CD8-positive, alpha-beta T cell (primary cell): ENCODE measurements at regions of chr12 and their contacts with region 1.

Region 1: DNA sequence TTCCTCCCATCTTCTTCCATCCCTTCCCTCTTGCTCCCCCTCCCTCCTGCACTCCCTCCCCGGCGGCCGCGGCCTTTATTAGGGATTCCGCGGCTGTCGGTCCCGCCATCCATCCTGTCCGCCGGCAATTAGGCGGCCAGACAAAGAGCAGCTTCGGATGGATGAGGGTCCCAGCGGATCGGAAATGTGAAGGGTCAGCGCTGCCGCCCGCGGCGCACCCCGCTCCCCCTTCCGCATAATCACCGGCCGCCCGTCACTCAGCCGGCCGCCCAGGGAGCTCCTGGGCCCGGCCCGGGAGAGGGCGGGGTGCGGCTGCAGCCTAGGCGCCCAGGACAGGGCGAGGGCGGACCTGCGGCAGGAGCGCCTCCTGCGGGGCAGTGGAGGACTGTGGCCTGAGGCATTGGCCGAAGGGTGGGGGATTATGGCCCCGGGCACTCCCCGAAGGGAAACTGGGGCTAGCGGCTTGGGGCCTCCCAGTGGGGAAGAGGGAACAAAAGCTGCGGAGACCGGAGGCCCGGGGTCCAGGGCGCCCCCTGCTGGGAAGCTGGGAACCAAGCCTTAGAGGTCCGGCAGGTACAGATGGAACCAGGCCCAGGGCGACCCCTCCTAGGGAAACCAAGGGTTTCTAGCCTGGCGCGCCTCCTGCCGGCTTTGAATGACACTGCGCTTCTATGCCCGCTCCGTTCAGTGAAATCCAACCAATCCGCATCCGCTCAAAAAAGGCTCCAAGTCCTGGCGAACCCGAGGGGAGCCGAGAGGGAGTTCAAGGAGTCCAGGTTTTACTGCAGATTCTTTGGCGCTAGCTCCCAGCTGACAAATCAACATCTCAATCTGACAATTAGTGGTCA is 4.4 kb upstream of the DNAJC22 start:
- DNase-seq: peak; percentile 39 to 84 (median 74)
- ATAC-seq: peak; percentile 66
- H3K4me3 ChIP-seq: peak overlapping the region; percentile 45 to 52
- H3K4me3 Mint-ChIP-seq: peak overlapping the region; percentile 73
- H3K27ac ChIP-seq: no peak overlapping the region
- H3K27ac Mint-ChIP-seq: no peak overlapping the region
- H3K4me1 ChIP-seq: peaks cover 43% of the 10 kb centered on the region
- H3K4me1 Mint-ChIP-seq: peaks cover 45% of the 10 kb centered on the region
- H3K27me3 ChIP-seq: peaks cover 22 to 55% of the 10 kb centered on the region in 2 experiments
- H3K27me3 Mint-ChIP-seq: peaks cover 42% of the 10 kb centered on the region
- CTCF ChIP-seq: peak; percentile 88

Region 2: DNA sequence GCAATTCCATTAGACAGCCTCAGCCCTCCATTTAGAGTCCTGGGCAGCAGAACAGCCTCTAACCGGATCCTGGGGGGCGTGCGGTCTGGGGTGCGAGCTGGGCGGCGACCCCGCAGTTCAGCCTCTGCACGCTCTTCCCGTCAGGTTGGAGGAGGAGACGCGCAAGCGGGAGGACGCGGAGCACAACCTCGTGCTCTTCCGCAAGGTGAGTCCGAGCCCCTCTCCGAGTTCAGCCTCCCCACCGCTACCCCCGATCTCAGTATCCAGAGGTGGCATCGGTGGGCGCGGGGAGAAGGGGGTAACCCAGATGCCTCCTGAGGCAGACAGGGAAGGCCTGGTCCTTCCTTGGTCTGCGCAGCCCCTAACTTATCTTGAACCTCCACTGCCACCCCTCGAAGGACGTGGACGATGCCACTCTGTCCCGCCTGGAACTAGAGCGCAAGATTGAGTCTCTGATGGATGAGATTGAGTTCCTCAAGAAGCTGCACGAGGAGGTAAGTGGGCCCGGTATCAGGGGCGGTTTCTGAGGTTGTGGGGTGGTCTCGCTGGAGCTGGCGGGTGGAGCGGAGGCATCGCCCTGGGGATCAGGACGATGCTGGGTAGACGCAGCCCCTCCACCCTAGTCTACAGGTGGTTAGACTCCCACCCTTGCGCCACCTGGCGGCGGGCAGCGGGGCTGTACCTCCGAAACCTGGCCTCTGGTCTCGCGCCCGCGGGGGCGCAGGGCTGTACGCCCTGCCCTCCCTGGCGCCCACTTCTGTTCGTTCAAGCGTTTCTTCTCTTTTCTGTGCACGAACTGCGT is 46.1 kb before region 1 on chr12:
- CTCF ChIA-PET with region 1: interaction called, 118 read pairs
- POLR2A ChIA-PET with region 1: interaction called, 4 read pairs
- intact Hi-C with region 1: no loop called
- DNase-seq: peak; percentile 30 to 76 (median 66)
- ATAC-seq: peak; percentile 84
- H3K4me3 ChIP-seq: peak overlapping the region in 1 of 2 experiments; percentile 46
- H3K4me3 Mint-ChIP-seq: peak overlapping the region; percentile 60
- H3K27ac ChIP-seq: no peak overlapping the region
- H3K27ac Mint-ChIP-seq: no peak overlapping the region
- H3K4me1 ChIP-seq: peaks cover 13% of the 10 kb centered on the region
- H3K4me1 Mint-ChIP-seq: peaks cover 19% of the 10 kb centered on the region
- H3K27me3 ChIP-seq: peaks cover 34 to 36% of the 10 kb centered on the region in 2 experiments
- H3K27me3 Mint-ChIP-seq: peaks cover 45% of the 10 kb centered on the region
- CTCF ChIP-seq: peak; percentile 80

Region 3: DNA sequence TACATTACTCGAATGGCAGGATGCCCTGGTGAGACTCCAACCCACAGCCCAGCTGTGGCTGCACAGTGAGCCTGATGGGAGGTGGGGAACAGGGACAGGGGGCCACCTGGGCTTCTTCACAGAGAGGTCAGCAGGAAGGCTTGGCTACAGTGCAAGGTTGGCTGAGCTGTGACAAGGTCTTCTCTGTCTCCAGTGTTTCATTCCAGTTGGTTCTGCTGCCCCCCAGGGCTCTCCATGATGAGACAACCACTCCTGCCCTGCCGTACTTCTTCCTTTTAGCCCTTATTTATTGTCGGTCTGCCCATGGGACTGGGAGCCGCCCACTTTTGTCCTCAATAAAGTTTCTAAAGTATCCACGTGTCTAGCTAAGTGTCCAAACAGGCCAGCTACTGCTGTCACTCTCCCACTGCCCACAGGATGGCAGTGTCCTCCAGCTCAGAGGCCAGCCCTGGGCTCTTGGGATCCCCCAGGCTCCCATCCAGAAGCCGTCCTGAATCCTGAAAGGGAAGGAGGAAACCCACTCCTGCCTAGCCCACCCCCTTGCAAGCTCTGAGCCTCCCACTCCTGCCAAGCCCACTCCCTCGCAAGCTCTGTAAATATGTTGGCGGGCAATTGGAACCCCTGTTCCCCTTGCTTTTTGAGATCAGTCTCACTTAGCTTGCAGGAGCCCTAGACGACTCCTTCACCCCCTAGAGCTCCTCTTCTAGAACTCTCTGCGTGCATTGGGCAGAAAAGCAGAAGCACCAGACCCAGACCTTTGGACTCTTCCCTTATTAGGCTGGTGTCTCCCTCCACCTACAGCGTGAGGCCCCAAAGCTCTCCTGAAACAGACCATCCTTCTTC is 10.7 kb before region 1 on chr12:
- CTCF ChIA-PET with region 1: interaction called, 35 read pairs
- POLR2A ChIA-PET with region 1: interaction called, 7 read pairs
- intact Hi-C with region 1: no loop called
- DNase-seq: peak in 2 of 9 experiments; percentile 44 to 52
- ATAC-seq: peak; percentile 70
- H3K4me3 ChIP-seq: no peak overlapping the region
- H3K4me3 Mint-ChIP-seq: no peak overlapping the region
- H3K27ac ChIP-seq: no peak overlapping the region
- H3K27ac Mint-ChIP-seq: no peak overlapping the region
- H3K4me1 ChIP-seq: peaks cover 5% of the 10 kb centered on the region
- H3K4me1 Mint-ChIP-seq: peaks cover 12% of the 10 kb centered on the region
- H3K27me3 ChIP-seq: peaks cover 15 to 18% of the 10 kb centered on the region in 2 experiments
- H3K27me3 Mint-ChIP-seq: peaks cover 38% of the 10 kb centered on the region
- CTCF ChIP-seq: peak; percentile 49